Naive thymus-derived CD4-positive, alpha-beta T cell (primary cell): ENCODE measurements at regions of chr1 and their contacts with region 1.

Region 1: GRCh38 chr1:190456129-190456528 is 21.5 kb downstream of the BRINP3 start:
- DNase-seq: no peak
- ATAC-seq: no peak
- H3K4me3 ChIP-seq: no peak overlapping the region
- H3K4me3 Mint-ChIP-seq: no peak overlapping the region
- H3K27ac ChIP-seq: no peak overlapping the region
- H3K27ac Mint-ChIP-seq: no peak overlapping the region
- H3K4me1 ChIP-seq: no peaks in the 10 kb centered on the region
- H3K4me1 Mint-ChIP-seq: no peaks in the 10 kb centered on the region
- H3K27me3 ChIP-seq: no peaks in the 10 kb centered on the region
- H3K27me3 Mint-ChIP-seq: no peaks in the 10 kb centered on the region

Region 2: GRCh38 chr1:190444464-190444863 is 11.7 kb before region 1 on chr1:
- CTCF ChIA-PET with region 1: no interaction called
- POLR2A ChIA-PET with region 1: no interaction called
- intact Hi-C with region 1: no loop called
- DNase-seq: no peak
- ATAC-seq: no peak
- H3K4me3 ChIP-seq: no peak overlapping the region
- H3K4me3 Mint-ChIP-seq: no peak overlapping the region
- H3K27ac ChIP-seq: no peak overlapping the region
- H3K27ac Mint-ChIP-seq: no peak overlapping the region
- H3K4me1 ChIP-seq: no peaks in the 10 kb centered on the region
- H3K4me1 Mint-ChIP-seq: no peaks in the 10 kb centered on the region
- H3K27me3 ChIP-seq: no peaks in the 10 kb centered on the region
- H3K27me3 Mint-ChIP-seq: no peaks in the 10 kb centered on the region

Region 3: GRCh38 chr1:190475421-190476141 is 19.5 kb after region 1 on chr1:
- CTCF ChIA-PET with region 1: no interaction called
- POLR2A ChIA-PET with region 1: no interaction called
- intact Hi-C with region 1: loop called in 1 of 2 experiments (anchors 2 kb)
- DNase-seq: no peak
- ATAC-seq: no peak
- H3K4me3 ChIP-seq: no peak overlapping the region
- H3K4me3 Mint-ChIP-seq: no peak overlapping the region
- H3K27ac ChIP-seq: no peak overlapping the region
- H3K27ac Mint-ChIP-seq: no peak overlapping the region
- H3K4me1 ChIP-seq: no peaks in the 10 kb centered on the region
- H3K4me1 Mint-ChIP-seq: peaks cover 0 to 19% (median 7%) of the 10 kb centered on the region in 7 donors
- H3K27me3 ChIP-seq: no peaks in the 10 kb centered on the region
- H3K27me3 Mint-ChIP-seq: peaks cover 25 to 44% (median 43%) of the 10 kb centered on the region in 5 donors